Stomach (tissue), 19 donors: ENCODE measurements at regions of chr12 and their contacts with region 1.

Region 1: DNA sequence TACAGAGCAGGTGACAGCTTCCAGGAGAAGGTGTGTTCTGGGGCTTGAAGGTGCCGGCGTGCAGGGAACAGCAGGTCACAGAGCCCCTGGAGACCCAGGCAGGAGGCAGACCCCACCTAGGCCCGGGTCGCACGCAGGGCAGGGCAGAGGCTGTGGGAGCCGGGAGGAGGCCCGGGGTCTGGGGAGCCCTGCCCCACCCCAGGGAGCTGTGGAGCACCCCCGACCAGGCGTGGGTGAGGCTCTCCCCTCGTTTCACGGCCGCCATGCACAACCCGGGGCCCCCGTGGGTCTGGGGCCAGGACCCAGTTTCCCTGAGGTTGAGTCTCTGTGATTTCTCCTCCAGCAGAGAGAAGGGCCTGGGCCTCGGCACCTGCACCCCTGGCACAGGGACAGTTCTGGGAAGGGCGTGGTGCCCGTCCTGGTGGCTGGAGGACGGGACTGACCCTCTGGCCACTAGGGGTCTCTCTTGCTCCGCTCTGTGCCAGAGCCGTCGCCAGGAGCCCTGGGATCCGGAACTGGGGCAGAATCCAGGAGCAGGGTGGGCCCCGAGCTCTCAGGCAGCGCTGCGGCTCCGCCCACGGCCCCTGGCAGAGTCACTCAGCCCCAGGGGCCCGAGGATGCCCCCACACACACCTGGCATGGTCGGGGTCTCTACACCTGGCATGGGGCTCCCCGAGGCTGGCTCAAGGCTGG is 75.2 kb upstream of the FBRSL1 start:
- DNase-seq: peak; percentile 84 to 94
- H3K4me3 ChIP-seq: peak overlapping the region in 1 of 4 donors; percentile 9
- H3K27ac ChIP-seq: no peak overlapping the region
- H3K4me1 ChIP-seq: peaks cover 8 to 14% (median 13%) of the 10 kb centered on the region in 4 donors
- H3K27me3 ChIP-seq: peaks cover 10 to 67% (median 32%) of the 10 kb centered on the region in 3 donors
- CTCF ChIP-seq: peak in 5 of 7 experiments; percentile 72 to 92 (median 88)
- EP300 ChIP-seq: no peak
- POLR2A ChIP-seq: no peak

Region 2: GRCh38 chr12:132243596-132244310 is 171.0 kb before region 1 on chr12:
- intact Hi-C with region 1: no loop called
- DNase-seq: no peak
- H3K4me3 ChIP-seq: no peak overlapping the region
- H3K27ac ChIP-seq: no peak overlapping the region
- H3K4me1 ChIP-seq: peaks cover 0 to 6% (median 0%) of the 10 kb centered on the region in 4 donors
- H3K27me3 ChIP-seq: peaks cover 0 to 17% (median 0%) of the 10 kb centered on the region in 3 donors
- CTCF ChIP-seq: no peak
- EP300 ChIP-seq: no peak
- POLR2A ChIP-seq: no peak

Region 3: DNA sequence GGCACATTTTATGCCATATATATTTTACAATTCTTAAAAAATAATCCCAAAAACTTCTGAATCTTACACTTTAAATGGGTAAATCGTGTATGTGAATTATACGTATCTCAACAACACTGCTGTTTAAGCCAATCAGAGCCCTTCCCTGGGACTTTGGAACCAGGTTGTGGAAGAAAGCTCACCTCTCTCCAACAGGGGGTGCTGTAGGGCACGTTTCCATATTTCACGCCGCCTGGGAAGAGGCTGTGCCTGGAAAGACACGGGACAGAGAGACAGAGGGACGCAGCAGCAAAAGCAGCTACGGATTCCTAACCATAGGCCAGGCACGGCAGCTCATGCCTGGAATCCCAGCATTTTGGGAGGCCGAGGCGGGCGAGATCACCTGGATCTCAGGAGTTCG is 45.8 kb after region 1 on chr12:
- intact Hi-C with region 1: no loop called
- DNase-seq: no peak
- H3K4me3 ChIP-seq: no peak overlapping the region
- H3K27ac ChIP-seq: no peak overlapping the region
- H3K4me1 ChIP-seq: no peaks in the 10 kb centered on the region
- H3K27me3 ChIP-seq: peaks cover 0 to 60% (median 10%) of the 10 kb centered on the region in 3 donors
- CTCF ChIP-seq: peak in 2 of 7 experiments; percentile 7 to 10
- EP300 ChIP-seq: no peak
- POLR2A ChIP-seq: no peak

Region 4: DNA sequence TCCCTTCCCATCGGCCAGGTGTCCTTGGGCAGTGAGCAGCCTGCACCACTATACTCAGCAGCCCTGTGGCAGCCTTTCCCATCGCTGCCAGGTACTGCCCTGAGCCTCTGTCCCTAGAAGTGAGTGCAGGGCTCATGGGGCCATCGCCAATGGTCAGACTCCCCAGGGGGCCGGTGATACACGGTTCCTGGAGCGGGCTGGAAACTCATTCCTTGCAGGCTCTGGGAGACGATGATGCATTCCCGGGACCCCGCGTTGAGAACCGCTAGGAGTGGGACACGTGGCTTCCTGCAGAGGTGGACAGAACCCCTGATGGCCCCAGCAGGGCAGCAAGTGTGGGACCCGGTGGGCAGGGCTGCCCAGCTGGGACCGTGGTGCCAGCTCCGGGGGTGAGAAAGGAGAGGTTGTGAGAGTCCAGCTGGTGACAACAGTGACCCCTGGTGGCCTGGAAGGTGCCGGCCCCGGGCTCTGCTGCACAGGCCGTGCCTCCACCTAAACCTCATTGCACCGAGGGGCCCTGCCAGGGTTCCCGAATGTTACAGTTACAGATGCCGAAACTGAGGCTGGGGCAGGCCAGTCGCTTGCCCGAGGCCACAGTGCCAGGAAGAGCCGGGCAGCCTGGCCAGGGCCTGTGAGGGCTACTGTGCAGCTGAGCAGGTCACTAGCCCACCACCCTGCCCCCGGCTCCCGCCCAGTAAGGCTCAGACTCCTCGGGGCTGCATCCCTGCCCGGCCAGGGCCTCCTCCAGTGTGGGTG is 109.0 kb after region 1 on chr12:
- intact Hi-C with region 1: loop called (anchors 10 kb)
- DNase-seq: peak; percentile 79 to 89
- H3K4me3 ChIP-seq: no peak overlapping the region
- H3K27ac ChIP-seq: peak overlapping the region in 4 of 5 donors; percentile 40 to 76 (median 46)
- H3K4me1 ChIP-seq: peaks cover 29 to 63% (median 54%) of the 10 kb centered on the region in 4 donors
- H3K27me3 ChIP-seq: no peaks in the 10 kb centered on the region
- CTCF ChIP-seq: peak in 5 of 7 experiments; percentile 58 to 73 (median 70)
- EP300 ChIP-seq: no peak
- POLR2A ChIP-seq: no peak

Region 5: GRCh38 chr12:132614861-132615578 is 200.2 kb after region 1 on chr12:
- intact Hi-C with region 1: loop called (anchors 5 kb)
- DNase-seq: peak; percentile 82 to 94
- H3K4me3 ChIP-seq: no peak overlapping the region
- H3K27ac ChIP-seq: no peak overlapping the region
- H3K4me1 ChIP-seq: peaks cover 7 to 37% (median 20%) of the 10 kb centered on the region in 4 donors
- H3K27me3 ChIP-seq: peaks cover 22 to 81% (median 62%) of the 10 kb centered on the region in 3 donors
- CTCF ChIP-seq: peak in 5 of 7 experiments; percentile 72 to 88 (median 87)
- EP300 ChIP-seq: no peak
- POLR2A ChIP-seq: no peak